ENCODE measurements at regions of chr14 and their contacts with region 1.

Region 1: DNA sequence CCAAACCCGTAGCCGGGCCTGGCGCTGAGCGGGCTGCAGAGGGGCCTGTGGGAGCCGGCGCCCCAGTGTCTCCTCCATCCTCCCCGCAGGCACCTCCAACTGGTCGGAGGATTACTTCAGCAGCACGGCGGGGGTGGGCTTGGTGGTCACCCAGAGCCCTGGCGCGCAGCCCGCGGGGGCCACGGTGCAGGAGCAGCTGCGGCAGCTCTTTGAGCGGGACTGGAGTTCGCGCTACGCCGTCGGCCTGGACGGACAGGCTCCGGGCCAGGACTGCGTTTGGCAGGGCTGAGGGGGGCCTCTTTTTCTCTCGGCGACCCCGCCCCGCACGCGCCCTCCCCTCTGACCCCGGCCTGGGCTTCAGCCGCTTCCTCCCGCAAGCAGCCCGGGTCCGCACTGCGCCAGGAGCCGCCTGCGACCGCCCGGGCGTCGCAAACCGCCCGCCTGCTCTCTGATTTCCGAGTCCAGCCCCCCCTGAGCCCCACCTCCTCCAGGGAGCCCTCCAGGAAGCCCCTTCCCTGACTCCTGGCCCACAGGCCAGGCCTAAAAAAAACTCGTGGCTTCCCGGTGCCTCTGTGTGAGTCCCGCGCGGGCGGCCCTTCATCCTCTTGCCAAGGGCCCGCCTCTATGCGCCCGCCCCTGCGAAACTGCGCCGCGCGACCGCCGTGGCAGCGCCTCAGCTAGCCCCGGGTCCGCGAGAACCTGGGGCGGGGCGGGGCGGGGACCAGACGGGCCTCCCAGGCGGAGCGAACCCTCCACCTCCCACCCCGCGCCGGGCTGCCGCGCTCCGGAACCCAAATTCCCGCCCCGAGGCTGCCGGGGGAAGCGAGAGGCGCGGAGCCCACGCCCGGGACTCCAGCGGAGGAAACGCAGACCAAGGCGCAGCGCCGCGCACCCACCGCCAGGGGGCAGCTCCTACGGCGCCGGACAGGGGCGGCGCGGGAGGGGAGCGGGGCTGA is 8.3 kb downstream of the PLD4 start:
- DNase-seq: peak; percentile 38
- ATAC-seq: peak; percentile 91
- H3K4me3 ChIP-seq: peak overlapping the region; percentile 34 to 59
- H3K27ac ChIP-seq: peak overlapping the region; percentile 3; the same call in 1 of the 2 replicates
- H3K4me1 ChIP-seq: peaks cover 0 to 7% of the 10 kb centered on the region in 2 experiments; a peak in 1 of 4 replicates
- H3K27me3 ChIP-seq: no peaks in the 10 kb centered on the region
- CTCF ChIP-seq: peak; percentile 43 to 75 (median 73)
- POLR2A ChIP-seq: no peak
- RAD21 ChIP-seq: peak; percentile 69

Region 2: DNA sequence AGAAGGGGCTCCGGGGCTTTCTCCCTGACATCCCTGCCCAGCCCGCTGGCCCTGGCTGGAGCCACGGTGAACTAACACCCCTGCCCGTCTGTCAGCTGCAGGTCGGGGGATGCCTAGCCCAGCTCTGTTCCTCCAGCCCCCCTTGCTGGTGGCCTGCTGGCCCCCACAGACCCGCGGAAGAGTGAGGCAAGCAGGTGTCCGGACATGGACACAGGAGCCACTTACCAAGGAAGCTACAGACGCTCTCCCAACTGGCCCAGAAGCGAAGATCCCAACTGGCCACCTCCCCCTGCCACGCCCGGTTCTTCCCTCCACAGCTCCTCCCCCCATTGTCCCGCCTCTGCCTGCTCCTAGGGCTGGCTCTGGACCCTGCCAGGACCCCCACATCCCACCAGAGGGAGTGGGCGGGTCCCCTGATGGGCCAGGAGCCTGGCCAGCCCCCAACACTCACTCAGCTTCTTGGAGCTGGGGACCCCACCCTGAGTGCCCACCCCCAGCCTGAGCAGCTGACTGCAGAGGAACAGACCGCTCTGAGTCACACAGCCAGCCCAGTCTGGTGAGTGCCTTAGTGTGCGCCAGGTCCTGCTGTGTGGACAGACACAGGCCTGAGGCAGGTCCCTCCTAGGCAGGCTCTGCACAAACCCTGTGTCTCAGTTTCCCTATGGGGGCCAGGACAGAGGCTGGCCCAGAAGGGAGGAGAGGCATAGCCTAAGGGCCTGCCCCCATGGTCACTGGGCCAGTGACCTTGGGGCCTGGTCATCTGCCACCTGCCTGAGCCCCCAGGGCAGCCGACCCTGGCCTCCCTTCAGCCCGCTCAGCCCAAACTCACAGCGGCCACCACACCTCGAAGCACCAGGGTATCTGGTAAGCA is 37.5 kb after region 1 on chr14:
- CTCF ChIA-PET with region 1: interaction called, 18 read pairs
- POLR2A ChIA-PET with region 1: interaction called, 5 read pairs
- RAD21 ChIA-PET with region 1: interaction called, 3 read pairs
- intact Hi-C with region 1: loop called (anchors 1 kb)
- DNase-seq: peak; percentile 56
- ATAC-seq: peak; percentile 37
- H3K4me3 ChIP-seq: peak overlapping the region; percentile 61 to 68
- H3K27ac ChIP-seq: peak overlapping the region; percentile 98
- H3K4me1 ChIP-seq: peaks cover 71 to 91% of the 10 kb centered on the region in 2 experiments
- H3K27me3 ChIP-seq: no peaks in the 10 kb centered on the region
- CTCF ChIP-seq: no peak
- POLR2A ChIP-seq: no peak
- RAD21 ChIP-seq: no peak

Region 3: GRCh38 chr14:105324080-105324778 is 391.3 kb after region 1 on chr14:
- CTCF ChIA-PET with region 1: no interaction called
- POLR2A ChIA-PET with region 1: no interaction called
- RAD21 ChIA-PET with region 1: no interaction called
- intact Hi-C with region 1: no loop called
- DNase-seq: no peak
- ATAC-seq: no peak
- H3K4me3 ChIP-seq: no peak overlapping the region
- H3K27ac ChIP-seq: no peak overlapping the region
- H3K4me1 ChIP-seq: no peaks in the 10 kb centered on the region; a peak in 1 of 4 replicates
- H3K27me3 ChIP-seq: no peaks in the 10 kb centered on the region
- CTCF ChIP-seq: no peak
- POLR2A ChIP-seq: no peak
- RAD21 ChIP-seq: no peak

Region 4: GRCh38 chr14:106120101-106120500 is 1187.1 kb after region 1 on chr14:
- CTCF ChIA-PET with region 1: no interaction called
- POLR2A ChIA-PET with region 1: no interaction called
- RAD21 ChIA-PET with region 1: no interaction called
- intact Hi-C with region 1: no loop called
- DNase-seq: no peak
- ATAC-seq: no peak
- H3K4me3 ChIP-seq: no peak overlapping the region
- H3K27ac ChIP-seq: no peak overlapping the region
- H3K4me1 ChIP-seq: no peaks in the 10 kb centered on the region
- H3K27me3 ChIP-seq: no peaks in the 10 kb centered on the region
- CTCF ChIP-seq: no peak
- POLR2A ChIP-seq: no peak
- RAD21 ChIP-seq: no peak

Measured in HCT116 (cell line).